H1 (cell line): ENCODE measurements at regions of chr3 and their contacts with region 1.

Region 1: DNA sequence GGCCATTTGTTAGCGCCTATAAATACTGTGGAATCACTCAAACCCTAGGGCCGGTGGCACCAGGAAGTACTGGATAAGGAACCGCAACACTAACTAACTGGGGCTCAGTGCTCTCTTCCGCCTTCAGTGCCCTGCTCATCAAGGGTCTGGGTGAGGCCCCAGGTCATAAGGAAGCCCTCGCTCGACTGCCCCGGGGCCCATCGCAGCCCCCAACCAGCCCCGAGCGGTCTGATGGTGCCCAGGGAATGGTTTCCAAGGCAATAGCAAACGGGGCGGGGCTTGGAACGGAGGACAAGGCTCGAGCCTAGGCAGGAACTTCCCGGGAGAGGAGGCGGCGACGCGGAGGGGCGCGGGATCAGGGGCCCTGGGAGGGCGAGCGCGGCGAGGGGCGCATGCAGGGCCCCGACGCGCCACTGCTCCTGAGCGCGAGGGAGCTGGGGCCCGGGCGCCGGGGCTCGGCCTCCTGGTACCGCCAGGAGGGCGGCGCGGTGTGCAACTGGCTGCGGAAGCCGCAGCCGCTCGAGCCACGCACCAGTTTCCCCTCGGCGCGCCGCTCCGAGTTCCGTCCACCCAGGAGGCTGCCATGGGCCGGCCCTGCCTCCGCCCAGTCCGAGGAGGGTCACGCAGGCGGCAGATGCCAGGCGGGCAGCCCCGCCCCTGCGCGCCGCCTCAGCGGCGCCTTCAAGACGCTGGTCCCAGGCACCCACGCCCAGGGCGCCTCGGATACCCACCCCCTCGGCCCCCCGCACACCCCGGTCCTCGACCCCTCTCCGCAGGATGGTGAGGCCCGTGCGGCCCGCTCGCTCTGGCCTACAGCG is at the start of gene TTLL3:
- DNase-seq: peak in 1 of 2 experiments; percentile 88
- H3K4me3 ChIP-seq: peak within 1 kb of the TSS; percentile 50 to 72 (median 58)
- H3K27ac ChIP-seq: peak within 1 kb of the TSS; percentile 3; the same call in 1 of the 2 replicates
- H3K4me1 ChIP-seq: peaks cover 0 to 9% (median 2%) of the 10 kb centered on the region in 4 experiments; a peak in 3 of 7 replicates
- H3K27me3 ChIP-seq: peaks cover 0 to 11% (median 9%) of the 10 kb centered on the region in 4 experiments; a peak in 5 of 7 replicates
- CTCF ChIP-seq: no peak
- EP300 ChIP-seq: no peak
- POLR2A ChIP-seq: no peak; a peak in 1 of 3 replicates
- RAD21 ChIP-seq: no peak
- total RNA-seq, gene TTLL3: 4.3 and 5.9 TPM in 2 replicates

Region 2: DNA sequence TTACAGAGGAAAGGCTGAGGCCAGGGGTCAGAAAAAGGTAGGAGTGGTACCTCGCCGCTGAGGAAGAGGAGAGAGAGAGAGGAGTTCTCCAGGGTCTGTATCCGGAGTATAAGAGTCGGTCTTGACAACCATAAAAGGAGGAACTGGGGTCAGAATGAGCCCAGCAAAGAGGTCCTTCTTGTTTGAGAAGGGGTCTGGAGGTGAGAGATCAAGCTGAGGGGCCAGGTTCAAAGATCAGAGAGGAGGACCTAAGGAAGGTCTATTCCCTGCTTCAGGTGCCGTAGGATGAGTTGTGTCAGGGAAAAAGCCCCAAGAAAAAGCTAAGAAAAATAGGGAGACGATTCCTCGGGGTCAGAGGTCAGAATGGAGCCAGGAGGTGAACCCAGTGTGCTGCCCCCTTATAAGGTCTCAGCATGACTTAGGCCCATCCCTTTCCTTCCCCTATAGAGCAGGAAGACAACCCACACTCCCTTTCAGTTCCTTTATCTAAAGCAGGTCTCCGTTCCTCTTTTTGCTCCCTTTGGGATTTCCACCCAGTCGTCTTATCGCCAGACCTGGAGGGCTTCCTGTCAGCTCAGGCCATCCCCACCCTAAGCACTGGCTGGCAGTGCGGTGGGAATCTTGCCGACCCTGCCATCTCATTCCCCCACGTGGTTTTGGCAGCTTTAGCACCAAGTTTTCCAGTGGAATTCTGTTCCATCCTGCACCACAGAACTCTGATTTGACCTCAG is 159.9 kb before region 1 on chr3:
- CTCF ChIA-PET with region 1: no interaction called
- POLR2A ChIA-PET with region 1: no interaction called
- DNase-seq: no peak
- H3K4me3 ChIP-seq: peak overlapping the region; percentile 90 to 99 (median 94)
- H3K27ac ChIP-seq: peak overlapping the region; percentile 67
- H3K4me1 ChIP-seq: peaks cover 2 to 6% (median 3%) of the 10 kb centered on the region in 4 experiments; a peak in 3 of 7 replicates
- H3K27me3 ChIP-seq: no peaks in the 10 kb centered on the region
- CTCF ChIP-seq: no peak
- EP300 ChIP-seq: no peak
- POLR2A ChIP-seq: no peak
- RAD21 ChIP-seq: no peak

Region 3: GRCh38 chr3:9715764-9716437 is 93.9 kb before region 1 on chr3:
- CTCF ChIA-PET with region 1: no interaction called
- POLR2A ChIA-PET with region 1: no interaction called
- DNase-seq: no peak
- H3K4me3 ChIP-seq: no peak overlapping the region
- H3K27ac ChIP-seq: no peak overlapping the region
- H3K4me1 ChIP-seq: peaks cover 0 to 3% (median 0%) of the 10 kb centered on the region in 4 experiments; a peak in 1 of 7 replicates
- H3K27me3 ChIP-seq: peaks cover 0 to 3% (median 0%) of the 10 kb centered on the region in 4 experiments; a peak in 2 of 7 replicates
- CTCF ChIP-seq: peak; percentile 3 to 36 (median 19); a peak in 3 of 4 replicates
- EP300 ChIP-seq: no peak
- POLR2A ChIP-seq: no peak
- RAD21 ChIP-seq: peak; percentile 29 to 42; a peak in 3 of 4 replicates

Region 4: DNA sequence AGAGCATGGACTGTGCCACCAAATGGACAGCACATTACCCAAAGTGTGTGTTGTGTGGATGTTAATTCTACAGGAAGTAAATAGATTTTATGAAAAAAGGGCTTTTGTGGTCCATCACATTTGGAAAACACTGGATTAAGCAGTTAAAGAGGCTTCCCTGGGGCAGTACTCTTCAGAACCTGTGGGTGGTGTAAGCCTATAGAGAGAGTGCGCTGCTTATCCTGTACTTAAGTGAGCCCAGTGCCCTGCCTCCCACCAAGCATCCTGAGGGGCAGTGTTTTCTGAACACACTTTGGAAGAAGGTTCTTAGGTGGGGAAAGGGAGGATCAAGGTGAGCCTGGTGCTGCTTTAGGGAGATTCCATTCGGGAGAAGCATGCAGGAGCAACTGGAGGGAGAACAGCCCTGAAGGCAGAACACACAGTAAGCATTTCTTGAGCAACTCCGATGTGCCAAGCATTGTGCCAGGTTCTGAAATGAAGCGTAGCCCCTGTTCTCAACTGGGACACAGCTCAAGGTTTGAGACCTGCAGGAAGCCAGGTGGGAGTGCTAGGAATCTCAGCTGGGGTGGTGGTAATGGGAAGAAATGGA is 11.2 kb after region 1 on chr3:
- CTCF ChIA-PET with region 1: interaction called, 30 read pairs
- POLR2A ChIA-PET with region 1: interaction called, 9 read pairs
- DNase-seq: no peak
- H3K4me3 ChIP-seq: no peak overlapping the region
- H3K27ac ChIP-seq: no peak overlapping the region
- H3K4me1 ChIP-seq: peaks cover 0 to 5% (median 2%) of the 10 kb centered on the region in 4 experiments; a peak in 2 of 7 replicates
- H3K27me3 ChIP-seq: no peaks in the 10 kb centered on the region; a peak in 1 of 7 replicates
- CTCF ChIP-seq: peak; percentile 34 to 66 (median 58)
- EP300 ChIP-seq: no peak
- POLR2A ChIP-seq: no peak
- RAD21 ChIP-seq: peak; percentile 58 to 64

Region 5: DNA sequence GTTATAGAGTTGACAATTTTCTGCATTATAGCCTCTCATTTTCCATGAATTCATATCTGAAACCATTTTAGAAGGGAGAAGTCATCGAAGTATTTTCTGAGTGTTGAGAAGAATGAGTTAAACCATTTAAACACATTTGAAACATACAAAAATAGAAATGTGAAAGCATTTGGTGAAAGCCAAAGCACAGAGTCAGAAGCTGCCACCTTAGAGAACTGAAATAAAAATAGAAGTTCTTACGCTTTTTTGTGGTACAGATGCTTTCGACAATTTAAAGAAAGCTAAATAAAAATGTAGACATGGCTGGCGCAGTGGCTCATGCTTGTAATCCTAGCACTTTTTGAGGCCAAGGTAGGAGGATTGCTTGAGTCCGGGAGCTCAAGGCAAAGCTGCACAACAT is 289.2 kb after region 1 on chr3:
- CTCF ChIA-PET with region 1: no interaction called
- POLR2A ChIA-PET with region 1: no interaction called
- DNase-seq: no peak
- H3K4me3 ChIP-seq: no peak overlapping the region
- H3K27ac ChIP-seq: no peak overlapping the region
- H3K4me1 ChIP-seq: no peaks in the 10 kb centered on the region
- H3K27me3 ChIP-seq: no peaks in the 10 kb centered on the region
- CTCF ChIP-seq: no peak
- EP300 ChIP-seq: no peak
- POLR2A ChIP-seq: no peak
- RAD21 ChIP-seq: no peak